AG04449 (cell line): ENCODE measurements at regions of chr22 and their contacts with region 1.

Region 1: GRCh38 chr22:41517172-41518047 is 26.9 kb downstream of the POLR3H start:
- DNase-seq: no peak
- H3K4me3 ChIP-seq: no peak overlapping the region
- CTCF ChIP-seq: peak; percentile 89

Region 2: DNA sequence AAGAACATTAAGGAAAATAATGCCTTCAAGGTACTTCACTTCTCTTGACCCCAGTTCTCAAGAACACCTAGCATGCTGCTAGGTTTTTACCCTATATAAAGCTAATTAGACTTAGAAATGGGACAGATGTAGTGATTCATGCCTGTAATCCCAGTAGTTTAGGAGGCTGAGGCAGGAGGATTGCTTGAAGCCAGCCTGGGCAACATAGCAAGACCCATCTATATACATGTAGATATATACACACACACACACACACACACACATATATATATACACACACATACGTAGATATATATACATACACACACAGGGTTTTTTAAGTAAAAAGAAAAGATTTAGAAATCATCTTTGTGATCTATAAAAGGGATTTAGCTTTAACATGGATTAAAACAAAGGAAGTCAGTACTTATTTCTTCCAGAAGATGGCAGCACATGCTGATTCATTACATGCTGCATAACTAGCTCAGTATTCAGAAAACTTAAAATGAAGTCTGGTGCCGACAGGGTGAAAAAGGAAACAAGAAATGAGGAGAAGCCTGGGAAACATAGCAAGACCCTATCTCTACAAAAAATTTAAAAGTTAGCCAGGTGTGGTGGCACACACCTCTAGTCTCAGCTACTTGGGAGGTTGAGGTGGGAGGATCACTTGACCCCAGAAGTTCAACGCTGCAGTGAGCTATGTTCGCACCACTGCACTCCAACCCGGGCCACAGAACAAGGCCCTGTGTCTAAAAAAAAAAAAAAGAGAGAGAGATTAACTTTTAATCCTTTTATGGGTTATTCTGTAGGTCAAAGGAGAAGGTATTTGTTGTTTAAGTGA is 594.7 kb before region 1 on chr22:
- CTCF ChIA-PET with region 1: interaction called, 15 read pairs
- POLR2A ChIA-PET with region 1: no interaction called
- DNase-seq: no peak
- H3K4me3 ChIP-seq: no peak overlapping the region
- CTCF ChIP-seq: peak; percentile 47

Region 3: DNA sequence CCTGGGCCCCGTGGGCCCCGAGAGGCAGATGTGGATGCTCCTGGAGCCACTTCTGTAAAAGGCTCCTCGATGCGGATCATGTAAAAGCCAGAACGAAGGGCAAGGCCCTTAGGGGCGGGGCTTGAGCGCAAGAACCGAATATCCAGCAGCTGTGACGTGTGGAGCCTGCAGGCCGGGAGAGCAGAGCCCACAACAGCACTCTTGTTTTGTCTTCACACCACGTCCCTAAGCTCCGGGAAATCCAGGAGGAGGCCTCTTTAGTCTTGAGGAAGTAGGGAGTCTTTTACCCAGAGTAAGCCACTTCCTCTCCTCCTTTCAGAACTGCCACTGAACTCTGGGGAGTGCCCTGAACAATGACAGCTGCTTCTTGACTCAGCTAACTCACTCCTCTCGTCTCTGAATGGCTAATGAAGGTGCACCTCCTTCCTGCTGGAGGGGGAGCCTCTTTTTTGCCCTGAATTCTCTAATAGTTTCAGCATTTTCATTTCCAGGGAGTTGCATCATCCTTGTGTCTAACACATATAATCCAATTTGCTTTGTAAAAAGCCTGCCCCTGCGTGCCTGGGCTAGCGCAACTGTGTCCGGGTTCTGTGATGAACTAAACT is 299.8 kb before region 1 on chr22:
- CTCF ChIA-PET with region 1: no interaction called
- POLR2A ChIA-PET with region 1: no interaction called
- DNase-seq: peak; percentile 51
- H3K4me3 ChIP-seq: no peak overlapping the region
- CTCF ChIP-seq: no peak

Region 4: DNA sequence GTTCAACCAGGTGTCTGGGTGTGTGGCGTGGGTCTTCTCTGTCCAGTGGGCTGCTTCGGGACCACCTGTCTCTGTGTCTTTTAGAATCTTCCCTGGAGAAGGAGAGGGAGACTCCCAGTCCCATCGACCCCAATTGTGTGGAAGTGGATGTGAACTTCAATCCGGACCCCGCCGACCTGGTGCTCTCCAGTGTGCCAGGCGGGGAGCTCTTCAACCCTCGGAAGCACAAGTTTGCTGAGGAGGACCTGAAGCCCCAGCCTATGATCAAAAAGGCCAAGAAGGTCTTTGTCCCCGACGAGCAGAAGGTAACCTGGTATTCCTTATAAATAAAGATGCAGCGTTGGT is 123.4 kb before region 1 on chr22:
- CTCF ChIA-PET with region 1: interaction called, 17 read pairs
- POLR2A ChIA-PET with region 1: no interaction called
- DNase-seq: no peak
- H3K4me3 ChIP-seq: no peak overlapping the region
- CTCF ChIP-seq: no peak

Region 5: GRCh38 chr22:41468381-41469217 is 48.8 kb before region 1 on chr22 and contains the starts of genes ACO2 and PHF5A:
- CTCF ChIA-PET with region 1: interaction called, 16 read pairs
- POLR2A ChIA-PET with region 1: no interaction called
- DNase-seq: peak; percentile 89
- H3K4me3 ChIP-seq: peak within 1 kb of the TSS; percentile 95
- CTCF ChIP-seq: no peak

Region 6: GRCh38 chr22:41501209-41501608 is 16.2 kb before region 1 on chr22:
- CTCF ChIA-PET with region 1: interaction called, 37 read pairs
- POLR2A ChIA-PET with region 1: no interaction called
- DNase-seq: no peak
- H3K4me3 ChIP-seq: no peak overlapping the region
- CTCF ChIP-seq: no peak

Region 7: GRCh38 chr22:41576877-41577276 is 59.5 kb after region 1 on chr22:
- CTCF ChIA-PET with region 1: no interaction called
- POLR2A ChIA-PET with region 1: no interaction called
- DNase-seq: no peak
- H3K4me3 ChIP-seq: no peak overlapping the region
- CTCF ChIP-seq: peak; percentile 71

Region 8: GRCh38 chr22:41596776-41597634 is 79.6 kb after region 1 on chr22:
- CTCF ChIA-PET with region 1: interaction called, 15 read pairs
- POLR2A ChIA-PET with region 1: no interaction called
- DNase-seq: no peak
- H3K4me3 ChIP-seq: no peak overlapping the region
- CTCF ChIP-seq: peak; percentile 94